HEK293 (cell line): ENCODE measurements at regions of chr12 and their contacts with region 1.

Region 1: GRCh38 chr12:110431957-110432587 is 18.1 kb downstream of the ARPC3 start:
- H3K4me3 ChIP-seq: no peak overlapping the region
- H3K27ac ChIP-seq: no peak overlapping the region
- H3K4me1 ChIP-seq: no peaks in the 10 kb centered on the region
- CTCF ChIP-seq: no peak

Region 2: GRCh38 chr12:110100315-110100970 is 331.6 kb before region 1 on chr12:
- CTCF ChIA-PET with region 1: interaction called, 19 read pairs
- POLR2A ChIA-PET with region 1: interaction called, 4 read pairs
- H3K4me3 ChIP-seq: no peak overlapping the region
- H3K27ac ChIP-seq: no peak overlapping the region
- H3K4me1 ChIP-seq: no peaks in the 10 kb centered on the region
- CTCF ChIP-seq: peak; percentile 70

Region 3: GRCh38 chr12:110199339-110200123 is 232.5 kb before region 1 on chr12:
- CTCF ChIA-PET with region 1: no interaction called
- POLR2A ChIA-PET with region 1: no interaction called
- H3K4me3 ChIP-seq: no peak overlapping the region
- H3K27ac ChIP-seq: no peak overlapping the region
- H3K4me1 ChIP-seq: 0 out of 2 replicates have a peak, but pooled peaks cover 3% of the 10 kb centered on the region
- CTCF ChIP-seq: no peak

Region 4: DNA sequence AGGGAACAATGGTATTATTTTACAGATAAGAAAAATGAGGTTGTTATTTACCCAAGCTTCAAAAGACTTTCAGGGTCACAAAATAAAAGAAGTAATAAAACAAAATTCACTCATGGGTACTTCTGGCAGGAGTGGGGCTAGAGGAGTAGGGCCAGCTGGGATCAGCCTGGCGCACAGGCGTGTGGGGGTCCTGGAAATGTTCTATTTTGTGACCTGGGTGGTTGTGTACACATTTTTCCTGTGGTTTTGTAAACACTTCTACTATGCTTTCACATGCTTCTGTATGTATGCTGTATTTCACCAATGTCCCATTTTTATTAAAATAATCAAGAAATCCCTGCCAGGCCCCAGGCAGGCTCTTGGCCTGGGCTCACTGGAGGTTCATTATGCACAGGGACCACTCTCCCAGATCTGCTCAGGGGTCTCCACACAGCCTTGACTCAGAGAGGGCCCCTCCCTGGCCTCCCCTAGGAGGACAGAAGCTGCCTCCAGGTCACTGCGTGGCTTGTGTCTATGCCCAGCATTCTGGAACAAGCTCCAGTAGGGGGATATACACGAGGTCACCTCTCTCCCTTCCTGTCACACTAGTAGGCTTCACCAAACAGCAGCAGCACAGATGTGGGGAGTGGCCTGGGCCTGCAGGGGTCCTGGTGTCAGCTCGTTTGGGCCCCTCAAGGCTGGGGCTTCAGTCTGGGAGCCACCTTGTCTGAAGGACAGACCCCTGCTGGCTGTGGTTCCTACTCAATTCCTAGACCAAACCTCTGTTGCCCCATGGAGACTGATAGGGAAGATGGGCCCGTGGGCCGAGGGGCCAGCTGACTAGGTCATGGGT is 66.4 kb before region 1 on chr12:
- CTCF ChIA-PET with region 1: no interaction called
- POLR2A ChIA-PET with region 1: no interaction called
- H3K4me3 ChIP-seq: no peak overlapping the region
- H3K27ac ChIP-seq: no peak overlapping the region
- H3K4me1 ChIP-seq: no peaks in the 10 kb centered on the region
- CTCF ChIP-seq: no peak

Region 5: GRCh38 chr12:110379197-110379596 is 52.9 kb before region 1 on chr12:
- CTCF ChIA-PET with region 1: interaction called, 12 read pairs
- POLR2A ChIA-PET with region 1: interaction called, 6 read pairs
- H3K4me3 ChIP-seq: no peak overlapping the region
- H3K27ac ChIP-seq: no peak overlapping the region
- H3K4me1 ChIP-seq: no peaks in the 10 kb centered on the region
- CTCF ChIP-seq: no peak

Region 6: GRCh38 chr12:110449799-110450497 is 17.9 kb after region 1 on chr12 and contains the start of gene ARPC3:
- CTCF ChIA-PET with region 1: interaction called, 10 read pairs
- POLR2A ChIA-PET with region 1: interaction called, 9 read pairs
- H3K4me3 ChIP-seq: peak within 1 kb of the TSS; percentile 73
- H3K27ac ChIP-seq: peak within 1 kb of the TSS; percentile 66
- H3K4me1 ChIP-seq: no peaks in the 10 kb centered on the region
- CTCF ChIP-seq: peak; percentile 96

Region 7: DNA sequence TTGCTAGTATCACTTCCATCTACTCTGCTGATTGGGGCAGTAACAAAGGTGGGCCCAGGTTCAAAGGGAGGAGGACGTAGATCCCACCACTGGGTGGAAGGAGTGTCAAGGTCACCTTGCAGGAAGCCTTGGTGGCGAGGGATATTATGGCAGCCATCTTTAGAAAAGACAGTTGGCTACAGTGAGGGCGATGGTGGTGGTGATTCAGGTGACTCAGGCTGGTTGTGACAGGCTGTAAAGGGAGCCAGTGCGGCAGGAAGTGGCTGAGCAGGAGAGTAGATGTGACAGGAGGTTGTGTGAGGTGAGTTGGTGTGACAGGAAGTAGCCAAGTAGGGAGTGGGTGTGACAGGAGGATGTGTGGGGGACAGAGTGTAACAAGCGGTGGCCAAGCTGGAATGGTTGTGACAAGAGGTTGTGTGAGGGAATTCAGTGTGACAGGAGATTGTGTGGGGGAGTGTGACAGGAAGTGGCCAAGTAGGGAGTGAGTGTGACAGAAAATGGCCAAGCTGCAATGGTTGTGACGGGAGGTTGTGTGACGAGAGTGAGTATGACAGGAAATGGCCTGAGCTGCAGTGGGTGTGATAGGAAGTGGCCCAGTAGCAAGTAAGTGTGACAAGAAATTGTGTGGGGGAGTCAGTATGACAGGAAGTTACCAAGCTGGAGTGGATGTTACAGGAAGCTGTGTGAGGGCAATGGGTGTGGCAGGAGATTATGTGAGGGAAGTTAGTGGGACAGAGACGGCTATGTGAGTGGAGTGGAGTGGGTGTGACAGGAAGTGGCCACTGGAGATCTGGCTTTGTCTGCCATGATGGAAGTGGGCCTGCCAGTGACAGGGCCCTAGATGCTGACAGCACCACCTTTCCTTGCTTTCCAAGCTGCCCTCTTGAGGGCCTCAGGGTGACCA is 624.8 kb after region 1 on chr12:
- CTCF ChIA-PET with region 1: no interaction called
- POLR2A ChIA-PET with region 1: no interaction called
- H3K4me3 ChIP-seq: no peak overlapping the region
- H3K27ac ChIP-seq: no peak overlapping the region
- H3K4me1 ChIP-seq: 0 out of 2 replicates have a peak, but pooled peaks cover 3% of the 10 kb centered on the region
- CTCF ChIP-seq: no peak